ENCODE measurements at regions of chr13 and their contacts with region 1.

Region 1: DNA sequence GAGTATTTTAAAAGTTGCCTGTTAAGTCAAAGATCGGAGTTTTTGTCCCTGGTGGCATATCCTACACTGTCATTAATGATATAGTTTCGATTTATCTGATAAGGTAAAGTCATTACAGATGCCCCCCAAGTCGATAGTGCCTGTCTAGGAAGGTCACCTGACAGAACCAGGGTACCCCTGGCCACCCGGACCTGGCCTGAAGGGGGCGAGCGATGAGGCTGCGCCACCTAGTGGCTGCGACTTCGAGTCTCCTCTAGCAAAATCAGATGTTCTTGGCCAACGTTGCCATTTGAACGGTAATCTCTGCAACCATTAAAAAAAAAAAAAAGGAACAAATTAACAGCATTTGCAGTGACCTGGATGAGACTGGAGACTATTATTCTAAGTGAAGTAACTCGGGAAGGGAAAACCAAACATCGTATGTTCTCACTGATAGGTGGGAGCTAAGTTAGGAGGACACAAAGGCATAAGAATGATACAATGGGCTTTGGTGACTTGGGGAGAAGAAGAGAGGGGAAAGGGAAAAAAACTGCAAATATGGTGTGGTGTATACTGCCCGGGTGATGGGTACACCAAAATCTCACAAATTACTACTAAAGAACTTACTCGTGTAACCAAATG is 565.1 kb downstream of the LIG4 start:
- DNase-seq: peak; percentile 61
- ATAC-seq: peak; percentile 81
- H3K4me3 ChIP-seq: no peak overlapping the region
- H3K27ac ChIP-seq: no peak overlapping the region
- H3K4me1 ChIP-seq: no peaks in the 10 kb centered on the region
- H3K27me3 ChIP-seq: no peaks in the 10 kb centered on the region
- CTCF ChIP-seq: peak; percentile 89

Region 2: GRCh38 chr13:106709522-106709921 is 940.7 kb before region 1 on chr13:
- CTCF ChIA-PET with region 1: no interaction called
- POLR2A ChIA-PET with region 1: no interaction called
- intact Hi-C with region 1: no loop called
- DNase-seq: no peak
- ATAC-seq: no peak
- H3K4me3 ChIP-seq: no peak overlapping the region
- H3K27ac ChIP-seq: no peak overlapping the region
- H3K4me1 ChIP-seq: no peaks in the 10 kb centered on the region
- H3K27me3 ChIP-seq: peaks cover 69% of the 10 kb centered on the region
- CTCF ChIP-seq: no peak

Region 3: GRCh38 chr13:107205303-107206104 is 444.7 kb before region 1 on chr13:
- CTCF ChIA-PET with region 1: no interaction called
- POLR2A ChIA-PET with region 1: no interaction called
- intact Hi-C with region 1: loop called (anchors 1 kb)
- DNase-seq: peak; percentile 60
- ATAC-seq: peak; percentile 82
- H3K4me3 ChIP-seq: no peak overlapping the region
- H3K27ac ChIP-seq: no peak overlapping the region
- H3K4me1 ChIP-seq: peaks cover 11% of the 10 kb centered on the region; the same call in 1 of the 2 replicates
- H3K27me3 ChIP-seq: no peaks in the 10 kb centered on the region
- CTCF ChIP-seq: peak; percentile 93

Region 4: DNA sequence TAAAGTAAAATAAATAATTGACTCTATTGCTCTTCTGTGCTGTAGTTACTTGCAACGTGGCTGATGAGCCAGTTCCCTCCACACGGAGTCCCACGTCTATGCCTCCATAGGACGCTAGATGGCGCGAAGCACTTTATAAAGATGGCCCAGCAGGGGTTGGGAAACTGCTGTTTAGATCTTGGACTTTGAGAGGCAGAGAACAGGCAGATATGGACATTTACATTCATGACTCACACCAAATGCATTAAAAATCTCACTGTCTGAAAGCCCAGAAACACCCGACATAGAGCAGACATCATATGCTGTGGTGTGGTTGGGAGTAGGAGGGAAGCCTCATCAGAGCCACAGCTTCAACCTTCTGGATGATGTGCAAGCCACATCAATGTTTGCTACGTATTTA is 439.1 kb before region 1 on chr13:
- CTCF ChIA-PET with region 1: no interaction called
- POLR2A ChIA-PET with region 1: no interaction called
- intact Hi-C with region 1: loop called (anchors 1 kb)
- DNase-seq: peak; percentile 88
- ATAC-seq: peak; percentile 93
- H3K4me3 ChIP-seq: peak overlapping the region; percentile 46; the same call in 1 of the 2 replicates
- H3K27ac ChIP-seq: no peak overlapping the region
- H3K4me1 ChIP-seq: peaks cover 13% of the 10 kb centered on the region; the same call in 1 of the 2 replicates
- H3K27me3 ChIP-seq: no peaks in the 10 kb centered on the region
- CTCF ChIP-seq: peak; percentile 89

Region 5: GRCh38 chr13:108137176-108137575 is 487.0 kb after region 1 on chr13:
- CTCF ChIA-PET with region 1: no interaction called
- POLR2A ChIA-PET with region 1: no interaction called
- intact Hi-C with region 1: no loop called
- DNase-seq: no peak
- ATAC-seq: no peak
- H3K4me3 ChIP-seq: no peak overlapping the region
- H3K27ac ChIP-seq: no peak overlapping the region
- H3K4me1 ChIP-seq: no peaks in the 10 kb centered on the region
- H3K27me3 ChIP-seq: peaks cover 17% of the 10 kb centered on the region; the same call in 1 of the 2 replicates
- CTCF ChIP-seq: no peak

Measured in PC-3 (cell line).